Activated CD4-positive, alpha-beta T cell treated with anti-CD3 and anti-CD28 coated beads, Interleukin-2, amount 10 ng/mL, durations not matched to agents 7 days and 5 days (primary cell): ENCODE measurements at regions of chr11 and their contacts with region 1.

Region 1: GRCh38 chr11:75562048-75562835 is at the start of gene SERPINH1:
- DNase-seq: peak; percentile 69
- H3K4me3 Mint-ChIP-seq: peak within 1 kb of the TSS; percentile 94
- H3K27ac Mint-ChIP-seq: peak within 1 kb of the TSS; percentile 96
- H3K4me1 Mint-ChIP-seq: peaks cover 47% of the 10 kb centered on the region
- H3K27me3 Mint-ChIP-seq: no peaks in the 10 kb centered on the region
- total RNA-seq, gene SERPINH1: 11.3 to 11.9 TPM

Region 2: GRCh38 chr11:75547580-75548058 is 14.6 kb before region 1 on chr11:
- CTCF ChIA-PET with region 1: interaction called, 14 read pairs
- POLR2A ChIA-PET with region 1: no interaction called
- DNase-seq: peak; percentile 29
- H3K4me3 Mint-ChIP-seq: no peak overlapping the region
- H3K27ac Mint-ChIP-seq: no peak overlapping the region
- H3K4me1 Mint-ChIP-seq: no peaks in the 10 kb centered on the region
- H3K27me3 Mint-ChIP-seq: peaks cover 2% of the 10 kb centered on the region

Region 3: GRCh38 chr11:75577207-75577606 is 15.0 kb after region 1 on chr11:
- CTCF ChIA-PET with region 1: interaction called, 21 read pairs
- POLR2A ChIA-PET with region 1: no interaction called
- DNase-seq: peak; percentile 61
- H3K4me3 Mint-ChIP-seq: no peak overlapping the region
- H3K27ac Mint-ChIP-seq: no peak overlapping the region
- H3K4me1 Mint-ChIP-seq: peaks cover 15% of the 10 kb centered on the region
- H3K27me3 Mint-ChIP-seq: no peaks in the 10 kb centered on the region